Psoas muscle (tissue), 8 donors: ENCODE measurements at regions of chr4 and their contacts with region 1.

Region 1: GRCh38 chr4:7254736-7255487 is 62.6 kb downstream of the SORCS2 start:
- DNase-seq: peak in 1 of 2 donors; percentile 35
- ATAC-seq: no peak
- H3K4me3 ChIP-seq: no peak overlapping the region
- H3K27ac ChIP-seq: peak overlapping the region; percentile 68
- H3K4me1 ChIP-seq: peaks cover 42% of the 10 kb centered on the region
- H3K27me3 ChIP-seq: peaks cover 0 to 1% (median 0%) of the 10 kb centered on the region in 3 donors
- CTCF ChIP-seq: no peak

Region 2: DNA sequence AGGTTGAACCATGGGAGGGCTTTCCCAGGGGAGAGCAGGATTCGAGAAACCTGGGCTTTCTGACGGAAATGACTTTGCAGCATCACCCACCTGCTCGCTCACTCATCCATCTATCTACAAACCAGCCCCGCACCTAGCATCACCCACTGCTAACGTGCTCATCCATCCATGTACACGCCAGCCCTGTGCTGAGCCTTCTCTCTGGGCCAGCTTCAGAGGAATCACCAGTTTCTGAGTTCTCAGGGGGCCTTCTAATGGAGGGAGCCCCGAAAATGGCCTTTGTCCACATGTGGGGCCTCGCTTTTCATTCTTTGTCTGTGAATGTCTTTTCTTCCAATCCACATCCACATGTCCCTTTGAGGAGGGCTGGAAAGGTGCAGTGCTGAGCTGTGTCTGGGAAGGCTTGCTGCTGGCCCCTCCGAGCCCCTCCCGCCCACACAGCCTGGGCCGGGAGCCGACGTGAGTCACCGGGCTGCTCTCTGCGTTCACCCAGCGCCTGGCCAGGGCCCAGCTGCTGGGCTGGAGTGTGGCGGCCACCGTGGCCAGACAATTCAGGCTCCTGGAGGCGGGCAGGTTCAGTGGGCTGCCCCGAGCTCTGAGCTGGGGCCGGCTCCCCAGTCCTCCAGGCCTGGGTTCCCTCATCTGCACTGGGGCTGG is 47.9 kb before region 1 on chr4:
- intact Hi-C with region 1: loop called in 1 of 2 experiments (anchors 5 kb)
- DNase-seq: peak; percentile 89 to 92
- ATAC-seq: peak; percentile 95 to 100 (median 98)
- H3K4me3 ChIP-seq: no peak overlapping the region
- H3K27ac ChIP-seq: peak overlapping the region; percentile 37
- H3K4me1 ChIP-seq: peaks cover 25% of the 10 kb centered on the region
- H3K27me3 ChIP-seq: no peaks in the 10 kb centered on the region
- CTCF ChIP-seq: no peak

Region 3: GRCh38 chr4:7280926-7281690 is 26.2 kb after region 1 on chr4:
- intact Hi-C with region 1: no loop called
- DNase-seq: no peak
- ATAC-seq: no peak
- H3K4me3 ChIP-seq: no peak overlapping the region
- H3K27ac ChIP-seq: no peak overlapping the region
- H3K4me1 ChIP-seq: no peaks in the 10 kb centered on the region
- H3K27me3 ChIP-seq: no peaks in the 10 kb centered on the region
- CTCF ChIP-seq: no peak

Region 4: DNA sequence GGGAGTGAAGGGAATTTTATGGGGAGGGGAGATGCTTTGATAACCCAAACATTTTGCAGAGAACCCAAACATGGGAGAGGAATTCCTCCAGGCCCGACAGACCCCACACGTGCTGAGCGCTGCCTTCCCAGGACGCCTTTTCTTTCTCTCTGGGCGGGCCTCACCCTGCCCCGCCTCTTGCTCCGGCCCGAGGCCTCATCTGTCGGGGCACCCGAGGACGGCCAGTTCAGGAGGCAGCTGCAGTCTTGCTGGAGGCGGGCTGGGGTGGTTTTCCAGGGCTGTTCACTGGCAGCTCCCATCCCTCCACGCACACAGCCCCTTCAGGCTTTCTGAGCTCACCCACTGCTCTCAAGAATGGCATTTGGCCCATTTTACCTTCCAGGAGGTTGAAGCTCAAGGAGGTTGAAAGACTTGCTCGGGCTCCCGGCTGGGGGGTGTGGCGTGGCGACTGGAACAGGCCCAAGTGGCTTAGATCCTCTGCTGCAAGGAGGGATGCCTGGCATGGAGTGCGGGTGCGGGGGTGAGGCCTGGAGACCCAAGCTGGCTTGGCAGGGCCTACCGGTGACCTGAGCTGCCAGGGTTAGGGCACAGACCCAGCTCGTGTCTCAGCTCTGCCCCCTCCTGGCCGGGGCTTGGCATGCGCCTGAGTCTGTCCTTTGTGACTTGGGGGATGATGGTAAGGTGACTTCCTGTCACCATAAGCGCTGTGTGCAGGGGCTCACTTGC is 80.6 kb after region 1 on chr4:
- intact Hi-C with region 1: no loop called
- DNase-seq: peak; percentile 41 to 80
- ATAC-seq: peak; percentile 68 to 85 (median 74)
- H3K4me3 ChIP-seq: no peak overlapping the region
- H3K27ac ChIP-seq: no peak overlapping the region
- H3K4me1 ChIP-seq: no peaks in the 10 kb centered on the region
- H3K27me3 ChIP-seq: peaks cover 0 to 9% (median 2%) of the 10 kb centered on the region in 3 donors
- CTCF ChIP-seq: peak; percentile 41